Testis (tissue), 5 donors: ENCODE measurements at regions of chr7 and their contacts with region 1.

Region 1: DNA sequence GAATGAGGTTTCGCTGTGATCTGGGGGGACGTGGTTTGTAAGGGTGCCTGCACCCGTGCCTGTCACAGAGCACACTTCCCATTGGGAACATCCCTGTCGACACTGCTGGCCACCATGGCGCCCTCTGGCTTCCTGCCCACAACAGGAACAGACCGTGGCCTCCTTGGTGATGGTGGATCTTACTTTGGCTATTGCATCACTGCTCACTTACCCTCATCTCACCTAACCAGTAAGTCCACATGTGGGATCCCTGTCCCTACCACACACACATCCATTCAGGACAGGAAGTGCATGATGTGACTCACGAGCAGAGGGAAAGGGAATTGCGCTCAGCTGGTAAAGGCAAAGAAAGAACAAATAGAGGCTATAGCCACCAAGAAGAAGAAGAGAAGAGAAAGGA is 26.2 kb upstream of the SEC61G start:
- DNase-seq: no peak
- H3K4me3 ChIP-seq: no peak overlapping the region
- H3K27ac ChIP-seq: no peak overlapping the region
- H3K4me1 ChIP-seq: peaks cover 4% of the 10 kb centered on the region
- H3K27me3 ChIP-seq: no peaks in the 10 kb centered on the region
- CTCF ChIP-seq: no peak
- POLR2A ChIP-seq: no peak

Region 2: GRCh38 chr7:54596747-54597146 is 188.5 kb before region 1 on chr7:
- intact Hi-C with region 1: no loop called
- DNase-seq: no peak
- H3K4me3 ChIP-seq: no peak overlapping the region
- H3K27ac ChIP-seq: no peak overlapping the region
- H3K4me1 ChIP-seq: no peaks in the 10 kb centered on the region
- H3K27me3 ChIP-seq: no peaks in the 10 kb centered on the region
- CTCF ChIP-seq: no peak
- POLR2A ChIP-seq: no peak

Region 3: DNA sequence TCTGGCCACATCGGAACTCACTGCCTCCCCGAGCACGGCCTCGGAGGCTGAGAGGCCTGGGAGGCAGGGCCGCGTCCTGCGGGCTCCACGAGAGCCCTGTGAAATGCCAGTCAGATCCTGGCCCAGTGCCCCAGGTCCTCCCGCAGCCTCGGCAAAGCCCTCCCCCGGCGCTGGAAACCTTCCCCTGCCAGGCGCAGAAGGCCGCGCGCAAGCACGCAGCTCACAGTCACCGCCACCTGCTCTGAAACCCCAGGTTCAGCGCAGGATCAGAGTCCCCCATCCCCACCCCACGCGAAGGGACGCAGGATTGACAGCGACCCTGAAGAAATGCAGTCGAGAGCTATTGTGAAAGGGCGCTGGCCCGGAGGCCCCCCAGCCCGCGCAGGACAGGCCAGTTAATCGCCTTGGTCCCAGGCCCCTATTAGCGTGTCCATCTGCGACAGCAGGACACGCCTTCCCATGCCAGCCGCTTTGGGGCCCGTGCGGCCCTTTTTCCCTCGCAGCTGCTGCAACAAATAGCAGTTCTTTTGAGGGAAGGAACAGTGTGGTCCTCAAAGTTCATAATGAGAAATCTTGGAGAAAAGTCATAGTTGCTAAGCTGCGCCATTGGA is 220.1 kb after region 1 on chr7:
- intact Hi-C with region 1: no loop called
- DNase-seq: no peak
- H3K4me3 ChIP-seq: peak overlapping the region in 1 of 2 donors; percentile 31
- H3K27ac ChIP-seq: no peak overlapping the region
- H3K4me1 ChIP-seq: no peaks in the 10 kb centered on the region
- H3K27me3 ChIP-seq: no peaks in the 10 kb centered on the region
- CTCF ChIP-seq: no peak
- POLR2A ChIP-seq: no peak

Region 4: DNA sequence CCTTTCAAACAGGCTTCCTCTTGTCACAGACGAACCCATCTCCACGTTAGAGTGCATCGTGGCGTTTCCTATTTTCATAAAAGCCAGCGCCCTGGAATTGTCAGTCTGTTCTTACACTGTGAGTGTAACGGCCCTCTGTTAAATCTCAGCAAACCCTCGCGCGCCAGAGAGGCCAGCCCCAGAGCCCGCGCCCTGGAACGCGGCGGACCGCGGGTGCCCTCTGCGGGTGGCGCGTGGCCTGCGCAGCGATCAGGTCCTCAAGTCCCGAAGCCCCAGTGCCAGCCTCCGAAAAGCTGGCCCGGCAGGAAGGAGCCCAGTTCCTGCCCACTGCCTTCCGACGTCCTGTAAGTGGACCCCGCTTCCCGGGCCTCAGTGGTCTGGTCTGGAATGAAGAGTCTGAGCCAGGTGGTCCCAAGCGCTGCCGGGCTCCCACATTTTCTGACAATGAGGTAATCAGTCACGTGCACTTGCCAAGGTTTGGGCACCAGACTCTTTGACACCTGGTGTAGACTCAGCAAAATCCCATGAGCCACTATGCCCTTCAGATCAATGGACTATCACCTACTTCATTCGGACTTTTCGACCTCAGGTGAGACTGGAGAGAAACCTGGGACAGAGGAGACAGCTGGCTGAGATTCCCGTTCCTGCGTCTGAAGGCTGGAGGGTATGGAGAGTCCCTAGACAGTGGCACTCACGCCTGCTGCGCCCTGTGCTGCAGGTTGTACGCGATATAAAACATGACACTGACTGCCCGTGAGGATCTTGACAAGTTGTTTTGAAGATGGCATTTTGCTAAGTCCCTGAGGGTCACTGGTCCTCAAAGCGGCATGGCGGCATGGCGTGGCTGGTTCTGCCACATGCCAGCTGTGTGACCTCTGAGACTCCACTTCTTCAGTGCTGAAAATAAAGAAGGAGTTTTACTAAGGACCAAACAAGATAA is 470.5 kb after region 1 on chr7:
- intact Hi-C with region 1: loop called (anchors 2 kb)
- DNase-seq: peak; percentile 88
- H3K4me3 ChIP-seq: peak overlapping the region; percentile 58 to 69
- H3K27ac ChIP-seq: peak overlapping the region in 1 of 2 donors; percentile 12
- H3K4me1 ChIP-seq: peaks cover 6% of the 10 kb centered on the region
- H3K27me3 ChIP-seq: no peaks in the 10 kb centered on the region
- CTCF ChIP-seq: peak; percentile 72 to 90 (median 85)
- POLR2A ChIP-seq: no peak